ENCODE measurements at regions of chr12 and their contacts with region 1.

Region 1: GRCh38 chr12:6376079-6376869 is 911 bp upstream of the SCNN1A start:
- DNase-seq: peak; percentile 97
- H3K4me3 Mint-ChIP-seq: peak overlapping the region; percentile 89
- H3K27ac Mint-ChIP-seq: peak overlapping the region; percentile 97
- H3K4me1 Mint-ChIP-seq: peaks cover 56% of the 10 kb centered on the region
- H3K27me3 Mint-ChIP-seq: no peaks in the 10 kb centered on the region
- CTCF ChIP-seq: no peak

Region 2: DNA sequence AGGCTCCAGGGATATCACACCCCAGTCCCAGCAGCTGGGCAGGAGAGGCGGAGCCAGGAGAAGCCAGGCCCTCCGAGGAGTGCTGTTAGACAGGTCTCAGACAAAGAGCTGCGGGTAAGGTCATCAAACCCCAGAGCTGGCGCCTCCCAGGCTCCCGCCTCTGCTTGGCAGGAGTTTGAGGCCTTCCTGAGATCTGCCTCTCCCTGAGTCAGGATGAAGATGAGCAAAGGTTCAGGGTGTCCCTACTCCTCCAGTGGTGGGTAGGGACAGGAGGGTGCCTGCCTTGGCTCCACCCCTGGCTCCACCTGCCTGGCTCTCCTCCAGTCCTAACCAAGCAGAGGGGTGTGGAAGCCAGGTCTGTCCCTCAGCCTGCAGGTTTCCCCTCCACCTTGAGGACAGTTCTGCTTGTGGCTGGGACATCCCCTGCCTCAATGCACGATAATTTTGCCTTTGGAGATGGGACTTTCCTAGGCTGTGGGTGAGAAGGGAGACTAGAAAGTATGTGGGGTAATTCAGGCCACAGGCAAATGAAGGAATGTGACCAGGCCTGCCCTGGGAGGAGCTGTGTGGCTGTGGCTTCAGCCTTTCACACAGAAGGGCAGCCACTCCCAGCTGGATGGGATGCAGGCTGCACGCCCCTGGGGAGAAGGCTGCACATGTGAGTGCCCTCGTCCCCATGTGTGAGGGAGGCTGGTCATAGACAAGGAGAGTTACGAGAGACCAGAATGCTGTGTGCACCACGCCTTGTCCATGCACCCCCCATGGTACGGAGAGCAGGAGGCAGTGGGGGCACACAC is 63.5 kb before region 1 on chr12:
- CTCF ChIA-PET with region 1: interaction called, 4 read pairs
- POLR2A ChIA-PET with region 1: interaction called, 17 read pairs
- intact Hi-C with region 1: no loop called
- DNase-seq: peak; percentile 84
- H3K4me3 Mint-ChIP-seq: peak overlapping the region; percentile 24
- H3K27ac Mint-ChIP-seq: peak overlapping the region; percentile 54
- H3K4me1 Mint-ChIP-seq: peaks cover 14% of the 10 kb centered on the region
- H3K27me3 Mint-ChIP-seq: no peaks in the 10 kb centered on the region
- CTCF ChIP-seq: no peak

Region 3: DNA sequence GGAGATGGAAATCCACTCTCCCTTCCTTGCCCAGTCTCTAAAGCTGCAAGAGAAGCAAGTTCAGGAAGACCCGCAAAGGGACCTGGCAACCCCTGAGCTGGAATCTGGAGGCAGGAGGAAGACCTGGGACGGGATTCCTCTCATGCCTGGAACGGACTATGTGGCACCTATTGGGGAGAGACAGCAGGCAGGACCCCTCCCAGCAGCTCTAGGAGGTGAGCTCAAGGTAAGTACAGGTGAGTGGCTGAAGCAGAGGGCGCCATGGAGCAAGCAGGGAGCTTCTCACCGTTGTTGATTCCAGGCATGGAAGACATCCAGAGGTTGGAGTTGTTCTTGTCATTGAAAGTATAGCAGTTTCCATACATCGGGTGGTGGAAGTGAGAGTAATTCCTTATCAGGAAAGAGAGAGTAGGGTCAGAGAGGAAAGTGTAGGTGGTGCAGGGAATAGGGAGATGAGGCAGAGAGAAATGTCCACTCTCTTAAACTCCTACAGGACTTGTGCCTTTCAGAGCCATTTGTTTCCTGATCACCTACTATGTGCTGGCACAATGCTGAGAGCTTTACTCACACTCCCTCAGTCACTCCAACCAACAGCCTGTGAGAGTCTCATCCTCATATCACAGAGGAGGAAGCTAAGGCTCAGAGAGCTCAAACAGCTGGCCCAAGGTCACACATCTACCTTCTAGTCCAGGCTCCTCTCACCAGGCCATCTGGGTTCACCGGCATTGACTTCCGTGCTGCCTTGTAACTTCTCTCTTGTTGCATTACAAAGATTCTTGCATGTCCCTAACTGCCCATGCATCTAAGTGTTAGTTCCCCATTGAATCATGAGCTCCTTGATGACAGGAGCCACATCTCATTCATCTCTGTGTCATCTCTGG is 20.5 kb before region 1 on chr12:
- CTCF ChIA-PET with region 1: interaction called, 3 read pairs
- POLR2A ChIA-PET with region 1: interaction called, 739 read pairs
- intact Hi-C with region 1: no loop called
- DNase-seq: no peak
- H3K4me3 Mint-ChIP-seq: no peak overlapping the region
- H3K27ac Mint-ChIP-seq: peak overlapping the region; percentile 51
- H3K4me1 Mint-ChIP-seq: peaks cover 11% of the 10 kb centered on the region
- H3K27me3 Mint-ChIP-seq: no peaks in the 10 kb centered on the region
- CTCF ChIP-seq: no peak

Region 4: GRCh38 chr12:6632026-6632983 is 256.0 kb after region 1 on chr12:
- CTCF ChIA-PET with region 1: no interaction called
- POLR2A ChIA-PET with region 1: no interaction called
- intact Hi-C with region 1: no loop called
- DNase-seq: no peak
- H3K4me3 Mint-ChIP-seq: no peak overlapping the region
- H3K27ac Mint-ChIP-seq: no peak overlapping the region
- H3K4me1 Mint-ChIP-seq: peaks cover 17% of the 10 kb centered on the region
- H3K27me3 Mint-ChIP-seq: no peaks in the 10 kb centered on the region
- CTCF ChIP-seq: no peak

Measured in MCF 10A (cell line).